Activated CD8-positive, alpha-beta memory T cell treated with anti-CD3 and anti-CD28 coated beads, Interleukin-2, amount 10 ng/mL, durations not matched to agents 7 days and 5 days (primary cell): ENCODE measurements at regions of chr20 and their contacts with region 1.

Region 1: DNA sequence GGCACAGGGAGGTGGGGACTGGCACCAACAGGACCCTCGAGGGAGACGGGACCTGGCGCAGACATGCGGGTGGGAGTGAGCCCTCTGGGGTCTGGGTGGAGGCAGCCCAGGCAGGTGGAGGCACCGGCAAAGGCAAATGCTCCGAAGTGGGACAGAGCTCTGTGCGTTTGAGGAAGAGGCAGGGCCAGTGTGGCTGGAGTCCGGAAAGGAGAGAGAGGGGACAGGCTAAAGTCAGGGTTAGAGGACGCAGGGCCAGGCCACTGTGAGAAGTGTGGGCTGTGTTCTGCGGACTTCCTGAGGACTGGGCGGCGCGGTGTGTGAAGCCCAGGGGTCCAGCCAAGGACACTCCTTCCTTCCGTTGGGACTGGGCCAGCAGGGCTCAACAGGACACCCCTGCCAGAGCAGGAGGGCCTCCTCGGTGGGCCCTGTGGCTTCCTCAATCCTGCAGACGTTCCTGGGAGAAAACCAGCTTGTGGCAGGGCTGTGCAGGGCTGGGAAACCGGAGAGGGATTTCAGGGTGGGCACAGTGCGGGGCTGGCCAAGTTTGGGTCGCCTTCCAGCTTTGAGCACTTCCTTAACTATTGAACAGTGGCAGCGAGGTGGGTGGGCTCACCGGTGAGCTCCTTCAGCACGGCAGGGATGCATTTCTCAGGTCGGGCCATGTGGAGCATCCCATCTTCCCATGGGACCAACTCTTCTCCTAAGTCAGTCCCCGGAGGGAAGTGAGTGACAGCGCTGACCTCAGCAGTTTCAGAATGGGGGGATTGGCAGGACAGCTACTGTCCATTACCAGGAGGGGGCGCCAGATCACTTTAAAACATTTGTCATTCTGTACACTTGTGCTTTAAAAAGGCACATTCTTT is 22.5 kb downstream of the MOCS3 start:
- DNase-seq: peak; percentile 77
- ATAC-seq: peak; percentile 74
- H3K4me3 Mint-ChIP-seq: no peak overlapping the region
- H3K27ac Mint-ChIP-seq: no peak overlapping the region
- H3K4me1 Mint-ChIP-seq: peaks cover 8% of the 10 kb centered on the region
- H3K27me3 Mint-ChIP-seq: peaks cover 40% of the 10 kb centered on the region

Region 2: GRCh38 chr20:50967586-50967985 is 13.5 kb before region 1 on chr20:
- CTCF ChIA-PET with region 1: interaction called, 18 read pairs
- DNase-seq: no peak
- ATAC-seq: no peak
- H3K4me3 Mint-ChIP-seq: no peak overlapping the region
- H3K27ac Mint-ChIP-seq: no peak overlapping the region
- H3K4me1 Mint-ChIP-seq: no peaks in the 10 kb centered on the region
- H3K27me3 Mint-ChIP-seq: peaks cover 13% of the 10 kb centered on the region

Region 3: GRCh38 chr20:50992733-50993457 is 11.8 kb after region 1 on chr20:
- CTCF ChIA-PET with region 1: interaction called, 23 read pairs
- DNase-seq: peak; percentile 70
- ATAC-seq: peak; percentile 99
- H3K4me3 Mint-ChIP-seq: no peak overlapping the region
- H3K27ac Mint-ChIP-seq: no peak overlapping the region
- H3K4me1 Mint-ChIP-seq: peaks cover 2% of the 10 kb centered on the region
- H3K27me3 Mint-ChIP-seq: peaks cover 20% of the 10 kb centered on the region

Region 4: DNA sequence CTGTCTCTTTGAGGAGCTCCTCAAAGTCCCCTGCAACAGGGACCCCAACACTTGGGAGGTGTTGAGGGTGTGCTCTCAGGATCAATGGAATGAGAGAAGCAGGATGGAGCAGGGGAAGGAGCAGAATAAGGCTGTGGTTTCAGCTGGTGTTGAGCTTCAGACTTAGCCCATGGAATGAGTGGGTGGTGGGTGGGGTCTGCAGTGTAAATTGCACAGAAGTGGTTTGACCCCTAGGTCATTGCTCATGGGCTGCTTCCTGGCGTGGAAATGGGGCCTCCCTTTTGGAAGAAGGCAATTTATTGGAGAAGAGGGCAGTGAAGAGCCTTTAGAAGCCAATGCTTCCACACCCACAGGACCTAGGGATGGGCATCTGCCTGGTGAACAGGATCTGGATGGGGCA is 78.8 kb after region 1 on chr20:
- CTCF ChIA-PET with region 1: no interaction called
- DNase-seq: no peak
- ATAC-seq: no peak
- H3K4me3 Mint-ChIP-seq: no peak overlapping the region
- H3K27ac Mint-ChIP-seq: no peak overlapping the region
- H3K4me1 Mint-ChIP-seq: peaks cover 11% of the 10 kb centered on the region
- H3K27me3 Mint-ChIP-seq: peaks cover 41% of the 10 kb centered on the region

Region 5: DNA sequence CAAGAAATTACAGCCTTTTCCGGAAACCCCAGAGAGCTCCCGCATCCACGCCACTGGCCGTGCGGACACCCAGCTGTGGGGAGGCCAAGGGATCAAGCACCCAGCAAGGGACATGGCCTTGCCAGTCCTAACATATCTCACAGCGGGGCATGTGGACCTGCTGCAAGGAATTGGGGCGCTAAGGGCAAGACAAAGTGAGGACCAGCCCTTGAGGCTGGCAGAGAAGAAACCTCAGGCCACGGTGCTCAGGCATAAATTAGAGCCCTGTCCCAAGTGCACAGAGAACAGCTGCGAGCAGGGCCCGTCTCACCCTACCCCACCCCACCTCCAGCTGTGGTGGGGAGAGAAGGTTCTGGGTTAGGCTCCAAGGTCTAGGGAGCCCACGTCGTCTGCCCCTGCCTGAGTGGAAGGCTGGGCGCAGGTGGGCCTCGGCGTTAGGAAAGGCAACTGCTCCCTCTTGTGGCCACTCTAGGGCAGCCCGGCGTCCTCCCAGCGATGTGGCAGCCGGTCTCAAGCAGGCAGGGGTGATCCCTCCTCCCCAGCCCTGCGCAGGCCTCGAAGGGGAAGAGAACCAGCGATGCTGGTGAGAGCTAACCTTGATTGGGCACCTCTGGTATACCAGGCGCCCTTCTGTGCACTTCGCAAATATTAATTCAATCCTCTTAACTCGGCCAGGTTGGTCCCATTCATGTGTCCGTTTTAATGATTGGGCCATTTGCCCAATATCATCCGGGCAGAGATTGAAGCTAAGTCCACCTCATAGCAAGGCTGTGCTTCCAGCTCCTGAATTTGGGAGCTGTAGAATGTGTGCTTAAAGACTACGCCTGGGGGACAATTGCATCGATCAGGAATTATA is 325.6 kb after region 1 on chr20:
- CTCF ChIA-PET with region 1: interaction called, 143 read pairs
- DNase-seq: peak; percentile 76
- ATAC-seq: peak; percentile 96
- H3K4me3 Mint-ChIP-seq: no peak overlapping the region
- H3K27ac Mint-ChIP-seq: no peak overlapping the region
- H3K4me1 Mint-ChIP-seq: peaks cover 3% of the 10 kb centered on the region
- H3K27me3 Mint-ChIP-seq: peaks cover 30% of the 10 kb centered on the region